ENCODE measurements at regions of chr6 and their contacts with region 1.

Region 1: DNA sequence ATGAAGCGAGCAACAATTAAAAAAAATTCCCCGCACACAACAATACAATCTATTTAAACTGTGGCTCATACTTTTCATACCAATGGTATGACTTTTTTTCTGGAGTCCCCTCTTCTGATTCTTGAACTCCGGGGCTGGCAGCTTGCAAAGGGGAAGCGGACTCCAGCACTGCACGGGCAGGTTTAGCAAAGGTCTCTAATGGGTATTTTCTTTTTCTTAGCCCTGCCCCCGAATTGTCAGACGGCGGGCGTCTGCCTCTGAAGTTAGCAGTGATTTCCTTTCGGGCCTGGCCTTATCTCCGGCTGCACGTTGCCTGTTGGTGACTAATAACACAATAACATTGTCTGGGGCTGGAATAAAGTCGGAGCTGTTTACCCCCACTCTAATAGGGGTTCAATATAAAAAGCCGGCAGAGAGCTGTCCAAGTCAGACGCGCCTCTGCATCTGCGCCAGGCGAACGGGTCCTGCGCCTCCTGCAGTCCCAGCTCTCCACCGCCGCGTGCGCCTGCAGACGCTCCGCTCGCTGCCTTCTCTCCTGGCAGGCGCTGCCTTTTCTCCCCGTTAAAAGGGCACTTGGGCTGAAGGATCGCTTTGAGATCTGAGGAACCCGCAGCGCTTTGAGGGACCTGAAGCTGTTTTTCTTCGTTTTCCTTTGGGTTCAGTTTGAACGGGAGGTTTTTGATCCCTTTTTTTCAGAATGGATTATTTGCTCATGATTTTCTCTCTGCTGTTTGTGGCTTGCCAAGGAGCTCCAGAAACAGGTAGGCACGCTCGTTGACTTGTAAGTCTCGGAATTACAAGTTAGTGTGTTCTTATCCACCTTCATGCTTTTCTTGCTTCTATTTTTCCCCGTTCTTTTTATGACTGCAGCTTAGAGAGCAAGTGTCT is at the start of gene EDN1:
- H3K4me3 ChIP-seq: peak within 1 kb of the TSS; percentile 50
- H3K27ac ChIP-seq: no peak within 1 kb of the TSS; the same call in 1 of the 2 replicates
- H3K4me1 ChIP-seq: peaks cover 9% of the 10 kb centered on the region
- CTCF ChIP-seq: peak; percentile 14; the same call in 1 of the 2 replicates

Region 2: GRCh38 chr6:11653028-11653583 is 637.1 kb before region 1 on chr6:
- CTCF ChIA-PET with region 1: interaction called, 30 read pairs
- POLR2A ChIA-PET with region 1: no interaction called
- H3K4me3 ChIP-seq: no peak overlapping the region
- H3K27ac ChIP-seq: no peak overlapping the region
- H3K4me1 ChIP-seq: no peaks in the 10 kb centered on the region
- CTCF ChIP-seq: no peak

Region 3: GRCh38 chr6:12111363-12111670 is 178.9 kb before region 1 on chr6:
- CTCF ChIA-PET with region 1: no interaction called
- POLR2A ChIA-PET with region 1: no interaction called
- H3K4me3 ChIP-seq: no peak overlapping the region
- H3K27ac ChIP-seq: no peak overlapping the region
- H3K4me1 ChIP-seq: no peaks in the 10 kb centered on the region
- CTCF ChIP-seq: no peak

Region 4: DNA sequence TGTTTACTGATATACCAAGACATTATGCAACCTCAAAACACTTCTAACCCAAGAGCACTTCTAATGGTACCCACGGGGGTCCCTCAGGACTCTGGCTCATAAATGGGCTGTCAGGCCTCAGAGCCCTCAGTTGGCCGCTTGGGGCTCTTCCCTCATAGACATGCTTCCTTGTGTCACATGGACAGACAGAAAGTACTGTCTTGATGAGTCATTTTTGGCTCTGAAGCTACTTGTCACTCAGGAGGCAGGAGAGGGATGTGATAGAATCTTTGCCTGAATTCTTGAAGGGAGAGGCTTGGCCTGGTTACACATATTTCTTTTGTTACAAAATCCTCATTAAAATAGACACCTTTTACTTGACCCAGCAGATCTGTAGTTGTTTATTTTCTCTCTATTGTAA is 15.1 kb before region 1 on chr6:
- CTCF ChIA-PET with region 1: interaction called, 36 read pairs
- POLR2A ChIA-PET with region 1: no interaction called
- H3K4me3 ChIP-seq: no peak overlapping the region
- H3K27ac ChIP-seq: no peak overlapping the region
- H3K4me1 ChIP-seq: no peaks in the 10 kb centered on the region
- CTCF ChIP-seq: no peak

Region 5: GRCh38 chr6:12313992-12314805 is 24.0 kb after region 1 on chr6:
- CTCF ChIA-PET with region 1: interaction called, 10 read pairs
- POLR2A ChIA-PET with region 1: interaction called, 4 read pairs
- H3K4me3 ChIP-seq: no peak overlapping the region
- H3K27ac ChIP-seq: no peak overlapping the region
- H3K4me1 ChIP-seq: no peaks in the 10 kb centered on the region
- CTCF ChIP-seq: no peak

Region 6: DNA sequence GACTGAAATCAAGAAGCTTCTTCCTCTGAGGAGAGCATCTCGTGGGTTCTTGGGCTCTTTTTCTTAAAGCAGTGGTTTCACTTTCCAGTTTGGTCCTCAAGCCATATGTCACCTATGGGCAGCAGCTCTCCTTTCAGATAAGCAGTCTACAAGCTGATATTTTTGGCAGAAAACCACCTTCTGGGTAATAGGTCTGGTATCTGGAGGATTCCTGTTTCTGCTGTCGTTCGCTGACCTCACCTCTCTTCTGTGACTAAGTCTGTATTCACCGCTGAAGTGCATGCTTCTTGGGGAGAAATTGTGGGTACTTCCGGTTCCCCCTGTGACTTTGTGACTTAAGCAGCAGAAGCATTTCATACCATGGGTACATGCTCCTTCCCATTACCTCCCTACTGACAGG is 193.5 kb after region 1 on chr6:
- CTCF ChIA-PET with region 1: interaction called, 16 read pairs
- POLR2A ChIA-PET with region 1: interaction called, 3 read pairs
- H3K4me3 ChIP-seq: no peak overlapping the region
- H3K27ac ChIP-seq: no peak overlapping the region
- H3K4me1 ChIP-seq: no peaks in the 10 kb centered on the region
- CTCF ChIP-seq: no peak

Region 7: GRCh38 chr6:12605888-12606345 is 315.7 kb after region 1 on chr6:
- CTCF ChIA-PET with region 1: interaction called, 82 read pairs
- POLR2A ChIA-PET with region 1: interaction called, 4 read pairs
- H3K4me3 ChIP-seq: no peak overlapping the region
- H3K27ac ChIP-seq: no peak overlapping the region
- H3K4me1 ChIP-seq: peaks cover 14% of the 10 kb centered on the region
- CTCF ChIP-seq: peak; percentile 55; the same call in 1 of the 2 replicates

Measured in HEK293 (cell line).